ENCODE measurements at regions of chr17 and their contacts with region 1.

Region 1: DNA sequence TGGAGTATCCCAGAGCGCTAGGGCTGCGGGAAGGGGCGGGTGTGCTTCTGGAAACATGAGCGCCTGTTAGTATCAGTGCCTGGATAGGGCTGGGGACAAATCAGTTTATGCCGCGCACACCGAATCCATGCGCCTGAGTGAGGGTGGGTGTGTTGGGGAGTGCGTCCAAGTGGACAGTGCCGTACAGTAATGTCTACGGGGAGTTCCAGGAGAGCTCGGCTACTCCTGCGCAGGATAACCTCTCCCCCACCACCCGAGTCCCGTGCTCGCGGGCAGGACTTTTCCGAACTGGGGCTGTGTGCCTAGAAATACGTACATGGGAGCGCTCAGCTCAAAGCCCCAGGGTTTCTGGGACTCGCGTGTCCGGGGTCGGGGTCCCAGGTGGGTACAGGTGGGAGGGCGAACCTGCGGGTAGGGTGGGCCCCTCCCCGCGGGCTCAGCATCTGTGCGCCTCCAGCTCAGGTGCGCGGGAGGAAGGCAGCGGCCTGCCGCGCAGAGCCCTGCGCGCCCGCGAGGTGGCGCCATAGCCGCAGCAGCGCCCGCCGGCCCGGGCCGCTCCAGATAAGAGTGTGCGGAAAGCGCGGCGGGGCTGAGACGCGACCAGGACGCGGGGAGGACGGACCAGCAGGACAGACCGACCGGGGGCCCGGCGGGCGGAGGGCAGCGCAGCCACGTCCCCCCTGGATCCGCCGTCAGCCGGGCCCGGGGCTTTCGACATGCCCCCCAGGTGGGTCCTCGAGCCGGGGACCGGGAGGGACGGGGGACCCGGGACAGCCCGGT is at the start of gene HIC1:
- DNase-seq: peak; percentile 59 to 91 (median 84)
- ATAC-seq: peak; percentile 63
- H3K4me3 ChIP-seq: peak within 1 kb of the TSS; percentile 68
- H3K4me3 Mint-ChIP-seq: peak within 1 kb of the TSS; percentile 76 to 87 (median 80)
- H3K27ac ChIP-seq: peak within 1 kb of the TSS; percentile 70
- H3K27ac Mint-ChIP-seq: peak within 1 kb of the TSS in 8 of 9 donors; percentile 28 to 91 (median 73)
- H3K4me1 ChIP-seq: peaks cover 17 to 29% of the 10 kb centered on the region in 2 donors
- H3K4me1 Mint-ChIP-seq: peaks cover 8 to 28% (median 19%) of the 10 kb centered on the region in 7 donors
- H3K27me3 ChIP-seq: no peaks in the 10 kb centered on the region
- H3K27me3 Mint-ChIP-seq: peaks cover 3 to 15% (median 5%) of the 10 kb centered on the region in 5 donors
- total RNA-seq, gene HIC1: 1.4 to 128 (median 6.3) TPM

Region 2: GRCh38 chr17:1546292-1546922 is 508.3 kb before region 1 on chr17:
- CTCF ChIA-PET with region 1: no interaction called
- POLR2A ChIA-PET with region 1: no interaction called
- intact Hi-C with region 1: no loop called
- DNase-seq: no peak
- ATAC-seq: no peak
- H3K4me3 ChIP-seq: no peak overlapping the region
- H3K4me3 Mint-ChIP-seq: no peak overlapping the region
- H3K27ac ChIP-seq: no peak overlapping the region
- H3K27ac Mint-ChIP-seq: peak overlapping the region in 1 of 9 donors; percentile 9
- H3K4me1 ChIP-seq: no peaks in the 10 kb centered on the region
- H3K4me1 Mint-ChIP-seq: peaks cover 0 to 3% (median 0%) of the 10 kb centered on the region in 7 donors
- H3K27me3 ChIP-seq: no peaks in the 10 kb centered on the region
- H3K27me3 Mint-ChIP-seq: no peaks in the 10 kb centered on the region

Region 3: GRCh38 chr17:1908699-1909309 is 145.9 kb before region 1 on chr17:
- CTCF ChIA-PET with region 1: no interaction called
- POLR2A ChIA-PET with region 1: no interaction called
- intact Hi-C with region 1: loop called in 1 of 2 experiments (anchors 2 kb)
- DNase-seq: peak in 7 of 9 donors; percentile 7 to 38 (median 25)
- ATAC-seq: peak; percentile 57
- H3K4me3 ChIP-seq: peak overlapping the region; percentile 36
- H3K4me3 Mint-ChIP-seq: peak overlapping the region; percentile 48 to 76 (median 61)
- H3K27ac ChIP-seq: no peak overlapping the region
- H3K27ac Mint-ChIP-seq: no peak overlapping the region
- H3K4me1 ChIP-seq: no peaks in the 10 kb centered on the region
- H3K4me1 Mint-ChIP-seq: peaks cover 2 to 16% (median 14%) of the 10 kb centered on the region in 7 donors
- H3K27me3 ChIP-seq: peaks cover 0 to 14% of the 10 kb centered on the region in 2 donors
- H3K27me3 Mint-ChIP-seq: peaks cover 44 to 76% (median 55%) of the 10 kb centered on the region in 5 donors

Region 4: GRCh38 chr17:1939981-1940809 is 114.5 kb before region 1 on chr17:
- CTCF ChIA-PET with region 1: no interaction called
- POLR2A ChIA-PET with region 1: no interaction called
- intact Hi-C with region 1: no loop called
- DNase-seq: no peak
- ATAC-seq: no peak
- H3K4me3 ChIP-seq: no peak overlapping the region
- H3K4me3 Mint-ChIP-seq: no peak overlapping the region
- H3K27ac ChIP-seq: no peak overlapping the region
- H3K27ac Mint-ChIP-seq: no peak overlapping the region
- H3K4me1 ChIP-seq: no peaks in the 10 kb centered on the region
- H3K4me1 Mint-ChIP-seq: no peaks in the 10 kb centered on the region
- H3K27me3 ChIP-seq: no peaks in the 10 kb centered on the region
- H3K27me3 Mint-ChIP-seq: no peaks in the 10 kb centered on the region

Region 5: DNA sequence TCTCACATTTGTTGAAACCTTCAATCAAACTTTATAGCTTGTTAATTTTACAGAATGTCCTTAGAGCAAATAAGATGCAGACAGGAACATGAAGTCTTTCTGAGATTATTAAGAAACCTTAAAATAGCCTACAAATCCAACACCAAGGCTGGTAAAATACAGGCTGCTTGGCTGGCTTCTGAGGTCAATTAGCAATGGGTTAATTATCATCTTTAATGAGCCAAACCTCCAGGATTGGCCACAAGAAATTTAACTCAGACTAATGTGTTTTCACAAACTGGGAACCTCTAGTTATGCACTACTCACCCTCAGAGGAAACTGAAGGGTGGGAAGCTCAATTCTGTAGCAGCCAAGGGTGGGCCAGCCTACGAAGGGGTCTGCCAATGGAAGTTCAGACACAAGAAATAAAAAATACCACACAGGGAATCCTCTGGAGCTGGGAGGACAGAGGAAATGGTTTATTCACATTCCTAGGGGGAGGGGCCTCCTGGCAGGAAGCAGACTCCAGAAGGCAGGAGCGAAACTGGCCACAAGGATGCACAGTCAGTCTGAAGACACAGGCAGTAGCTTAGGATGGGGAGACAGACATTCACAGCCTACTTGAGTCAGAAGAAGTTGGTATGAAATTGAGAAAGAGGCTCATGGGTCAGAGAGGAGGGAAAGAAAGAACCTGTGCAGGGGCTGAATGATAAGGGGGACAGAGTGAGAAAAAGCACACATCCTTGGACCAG is 36.3 kb after region 1 on chr17:
- CTCF ChIA-PET with region 1: interaction called, 3 read pairs
- POLR2A ChIA-PET with region 1: interaction called, 4 read pairs
- intact Hi-C with region 1: loop called in 1 of 2 experiments (anchors 2 kb)
- DNase-seq: no peak
- ATAC-seq: no peak
- H3K4me3 ChIP-seq: no peak overlapping the region
- H3K4me3 Mint-ChIP-seq: peak overlapping the region; percentile 91 to 99 (median 96)
- H3K27ac ChIP-seq: peak overlapping the region; percentile 69
- H3K27ac Mint-ChIP-seq: peak overlapping the region; percentile 27 to 97 (median 95)
- H3K4me1 ChIP-seq: peaks cover 28 to 30% of the 10 kb centered on the region in 2 donors
- H3K4me1 Mint-ChIP-seq: peaks cover 28 to 76% (median 53%) of the 10 kb centered on the region in 7 donors
- H3K27me3 ChIP-seq: no peaks in the 10 kb centered on the region
- H3K27me3 Mint-ChIP-seq: no peaks in the 10 kb centered on the region

Region 6: DNA sequence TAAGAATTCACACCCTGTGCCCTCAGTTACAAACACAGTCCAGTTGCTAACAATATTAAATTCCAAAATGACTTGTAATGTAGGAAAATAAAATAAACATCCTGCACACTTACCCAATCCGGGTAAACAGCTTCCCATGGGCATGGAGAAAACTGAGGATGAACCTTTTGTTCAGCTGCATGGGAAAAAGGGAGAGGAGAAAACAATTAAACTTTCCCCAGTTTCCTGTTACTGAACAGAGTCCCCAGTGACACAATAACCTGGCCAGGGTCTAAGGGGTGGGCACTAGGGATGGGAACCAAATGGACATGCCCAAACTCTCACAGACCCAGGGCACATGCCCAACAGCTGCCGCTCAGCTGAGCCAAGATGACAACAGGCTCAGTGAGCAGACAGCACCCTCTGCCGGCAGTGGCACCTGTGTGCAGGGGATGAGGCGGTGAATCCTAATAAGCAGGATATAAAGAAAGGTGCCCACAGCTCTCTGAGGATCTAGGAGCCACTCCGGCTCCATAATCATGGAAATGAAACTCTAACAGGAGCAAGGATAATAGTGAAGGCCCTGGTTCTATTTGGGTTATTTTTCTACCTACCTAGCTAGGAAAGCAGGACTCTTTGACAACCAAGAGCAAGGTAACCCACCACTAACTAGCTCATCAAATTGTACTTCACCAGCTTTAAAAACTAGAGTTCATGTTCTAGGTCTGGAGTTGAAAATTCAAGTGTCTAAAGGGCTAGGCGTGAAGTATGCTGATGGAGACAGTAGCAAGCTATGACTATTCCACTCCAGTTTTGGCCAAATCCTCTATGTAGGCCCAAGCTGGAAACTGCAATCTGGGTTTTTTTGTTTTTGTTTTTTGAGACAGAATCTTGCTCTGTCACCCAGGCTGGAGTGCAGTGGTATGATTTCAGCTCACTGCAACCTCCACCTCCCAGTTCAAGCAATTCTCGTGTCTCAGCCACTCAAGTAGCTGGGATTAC is 190.1 kb after region 1 on chr17:
- CTCF ChIA-PET with region 1: interaction called, 31 read pairs
- POLR2A ChIA-PET with region 1: interaction called, 10 read pairs
- intact Hi-C with region 1: loop called (anchors 1 kb)
- DNase-seq: peak; percentile 63 to 82 (median 74)
- ATAC-seq: peak; percentile 100
- H3K4me3 ChIP-seq: no peak overlapping the region
- H3K4me3 Mint-ChIP-seq: peak overlapping the region in 1 of 10 donors; percentile 52
- H3K27ac ChIP-seq: no peak overlapping the region
- H3K27ac Mint-ChIP-seq: peak overlapping the region in 7 of 9 donors; percentile 60 to 96 (median 87)
- H3K4me1 ChIP-seq: peaks cover 0 to 6% of the 10 kb centered on the region in 2 donors
- H3K4me1 Mint-ChIP-seq: peaks cover 9 to 82% (median 39%) of the 10 kb centered on the region in 7 donors
- H3K27me3 ChIP-seq: no peaks in the 10 kb centered on the region
- H3K27me3 Mint-ChIP-seq: no peaks in the 10 kb centered on the region

Region 7: DNA sequence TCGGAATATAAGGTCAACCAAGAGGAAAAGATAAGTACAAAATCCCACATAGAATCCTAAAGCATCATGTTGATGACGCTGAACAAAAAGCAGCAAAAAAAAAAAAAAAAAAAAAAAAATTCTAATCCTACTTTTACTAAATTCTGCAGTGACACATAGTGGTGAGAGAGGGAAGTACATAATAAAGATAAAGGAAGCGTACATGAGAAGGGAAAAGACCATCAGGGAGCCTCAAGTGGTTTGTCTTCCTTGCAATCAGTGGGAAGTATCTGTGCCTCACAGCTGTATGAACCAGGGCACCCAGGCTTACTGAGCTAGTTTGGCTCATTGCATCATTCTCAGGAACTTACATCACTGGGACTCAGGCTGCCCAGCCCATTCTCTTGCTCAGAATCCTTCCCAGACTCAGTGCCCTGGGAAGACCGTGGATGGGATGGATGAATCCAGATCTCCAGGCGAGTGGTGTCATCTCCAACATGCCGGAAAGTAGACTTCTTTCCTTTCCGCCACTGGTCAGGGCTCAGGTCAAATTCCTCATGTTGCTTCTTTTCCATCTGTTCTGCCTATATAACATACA is 227.7 kb after region 1 on chr17:
- CTCF ChIA-PET with region 1: interaction called, 46 read pairs
- POLR2A ChIA-PET with region 1: interaction called, 24 read pairs
- intact Hi-C with region 1: loop called (anchors 1 kb)
- DNase-seq: peak in 7 of 9 donors; percentile 37 to 68 (median 58)
- ATAC-seq: peak; percentile 76
- H3K4me3 ChIP-seq: no peak overlapping the region
- H3K4me3 Mint-ChIP-seq: peak overlapping the region in 3 of 10 donors; percentile 12 to 64 (median 28)
- H3K27ac ChIP-seq: no peak overlapping the region
- H3K27ac Mint-ChIP-seq: peak overlapping the region; percentile 44 to 89 (median 72)
- H3K4me1 ChIP-seq: peaks cover 0 to 24% of the 10 kb centered on the region in 2 donors
- H3K4me1 Mint-ChIP-seq: peaks cover 21 to 58% (median 35%) of the 10 kb centered on the region in 7 donors
- H3K27me3 ChIP-seq: no peaks in the 10 kb centered on the region
- H3K27me3 Mint-ChIP-seq: no peaks in the 10 kb centered on the region

Region 8: GRCh38 chr17:2336215-2336851 is 281.6 kb after region 1 on chr17 and contains the start of gene TSR1:
- CTCF ChIA-PET with region 1: interaction called, 3 read pairs
- POLR2A ChIA-PET with region 1: no interaction called
- intact Hi-C with region 1: loop called (anchors 1 kb)
- DNase-seq: peak; percentile 78 to 91 (median 89)
- ATAC-seq: peak; percentile 91
- H3K4me3 ChIP-seq: peak within 1 kb of the TSS; percentile 99
- H3K4me3 Mint-ChIP-seq: peak within 1 kb of the TSS; percentile 97 to 99 (median 98)
- H3K27ac ChIP-seq: peak within 1 kb of the TSS; percentile 92
- H3K27ac Mint-ChIP-seq: peak within 1 kb of the TSS; percentile 88 to 98 (median 95)
- H3K4me1 ChIP-seq: peaks cover 10 to 13% of the 10 kb centered on the region in 2 donors
- H3K4me1 Mint-ChIP-seq: peaks cover 8 to 35% (median 28%) of the 10 kb centered on the region in 7 donors
- H3K27me3 ChIP-seq: no peaks in the 10 kb centered on the region
- H3K27me3 Mint-ChIP-seq: no peaks in the 10 kb centered on the region
- total RNA-seq, gene TSR1: 22.9 to 42.8 (median 30.0) TPM